Activated CD4-positive, alpha-beta memory T cell treated with anti-CD3 and anti-CD28 coated beads for 36 hours (primary cell): ENCODE measurements at regions of chr2 and their contacts with region 1.

Region 1: DNA sequence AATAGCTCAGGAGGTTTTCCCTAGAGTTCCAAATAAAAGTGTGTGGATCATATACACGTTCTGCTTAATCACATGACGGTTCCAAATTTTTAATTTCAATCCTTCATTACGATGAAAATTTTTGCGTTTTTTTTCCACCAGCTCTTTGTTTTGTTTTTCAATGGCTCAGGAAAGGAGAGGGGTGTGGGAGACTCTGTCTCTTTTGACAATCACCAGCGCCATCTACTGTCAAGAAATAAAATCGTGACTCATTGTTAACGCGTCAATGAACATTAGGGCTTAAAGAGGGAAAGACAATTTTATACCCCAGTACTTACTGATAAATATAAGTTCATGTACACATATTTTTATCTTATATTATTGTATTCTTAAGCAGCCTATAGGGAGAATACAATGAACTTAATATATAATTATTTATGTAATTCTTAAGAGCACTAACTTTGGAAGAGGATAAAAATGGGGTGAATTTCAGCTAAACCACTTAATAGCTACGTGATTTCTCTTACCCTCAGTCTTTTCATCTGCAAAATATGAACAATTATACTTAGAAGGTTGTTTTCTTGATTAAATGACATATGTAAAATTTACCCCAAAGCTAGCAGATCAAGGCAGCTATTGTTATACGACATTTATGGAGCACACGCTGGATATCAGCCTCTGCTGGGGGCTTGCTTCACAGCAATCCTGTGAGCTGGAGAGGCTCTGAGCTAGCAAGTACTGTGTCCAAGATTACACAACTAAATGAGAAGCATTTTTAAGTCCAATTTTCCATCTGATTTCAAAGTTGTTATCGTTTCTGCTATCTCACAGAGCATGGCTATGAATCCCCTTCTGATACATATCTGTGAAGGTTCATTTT is 47.4 kb upstream of the RMDN2 start:
- DNase-seq: no peak
- H3K4me3 Mint-ChIP-seq: no peak overlapping the region
- H3K27ac Mint-ChIP-seq: no peak overlapping the region
- H3K4me1 Mint-ChIP-seq: peaks cover 7% of the 10 kb centered on the region
- H3K27me3 Mint-ChIP-seq: peaks cover 16% of the 10 kb centered on the region

Region 2: GRCh38 chr2:37083873-37084794 is 793.6 kb before region 1 on chr2 and contains the starts of genes GPATCH11 and HEATR5B:
- CTCF ChIA-PET with region 1: interaction called, 3 read pairs
- POLR2A ChIA-PET with region 1: no interaction called
- intact Hi-C with region 1: loop called (anchors 10 kb)
- DNase-seq: peak; percentile 96
- H3K4me3 Mint-ChIP-seq: no peak within 1 kb of the TSS
- H3K27ac Mint-ChIP-seq: no peak within 1 kb of the TSS
- H3K4me1 Mint-ChIP-seq: peaks cover 36% of the 10 kb centered on the region
- H3K27me3 Mint-ChIP-seq: no peaks in the 10 kb centered on the region
- total RNA-seq, gene GPATCH11: 12.6 to 13.0 TPM
- total RNA-seq, gene HEATR5B: 18.1 to 20.3 TPM

Region 3: DNA sequence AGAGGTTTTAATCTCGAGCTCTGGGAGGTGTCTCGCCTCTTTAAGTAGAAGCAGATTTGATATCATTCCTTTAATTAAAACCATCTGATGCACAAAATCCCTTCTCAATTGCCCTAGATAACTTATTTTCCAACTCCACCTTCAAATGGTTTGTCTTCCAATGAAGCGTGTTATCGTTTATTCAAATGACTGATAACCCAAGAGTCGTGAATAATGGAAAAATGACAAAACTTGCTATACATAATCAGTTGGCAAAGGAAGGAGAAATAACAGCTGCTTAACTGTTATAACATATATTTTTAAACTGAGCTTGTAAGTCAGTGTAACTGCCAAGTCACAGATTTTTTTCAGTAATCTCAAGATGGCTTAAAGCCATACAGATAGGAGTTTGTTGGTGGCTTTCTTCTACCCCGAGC is 388.6 kb before region 1 on chr2:
- CTCF ChIA-PET with region 1: no interaction called
- POLR2A ChIA-PET with region 1: no interaction called
- intact Hi-C with region 1: no loop called
- DNase-seq: no peak
- H3K4me3 Mint-ChIP-seq: no peak overlapping the region
- H3K27ac Mint-ChIP-seq: no peak overlapping the region
- H3K4me1 Mint-ChIP-seq: no peaks in the 10 kb centered on the region
- H3K27me3 Mint-ChIP-seq: no peaks in the 10 kb centered on the region

Region 4: GRCh38 chr2:37537316-37537715 is 340.4 kb before region 1 on chr2:
- CTCF ChIA-PET with region 1: interaction called, 11 read pairs
- POLR2A ChIA-PET with region 1: no interaction called
- intact Hi-C with region 1: no loop called
- DNase-seq: no peak
- H3K4me3 Mint-ChIP-seq: no peak overlapping the region
- H3K27ac Mint-ChIP-seq: no peak overlapping the region
- H3K4me1 Mint-ChIP-seq: no peaks in the 10 kb centered on the region
- H3K27me3 Mint-ChIP-seq: peaks cover 1% of the 10 kb centered on the region

Region 5: DNA sequence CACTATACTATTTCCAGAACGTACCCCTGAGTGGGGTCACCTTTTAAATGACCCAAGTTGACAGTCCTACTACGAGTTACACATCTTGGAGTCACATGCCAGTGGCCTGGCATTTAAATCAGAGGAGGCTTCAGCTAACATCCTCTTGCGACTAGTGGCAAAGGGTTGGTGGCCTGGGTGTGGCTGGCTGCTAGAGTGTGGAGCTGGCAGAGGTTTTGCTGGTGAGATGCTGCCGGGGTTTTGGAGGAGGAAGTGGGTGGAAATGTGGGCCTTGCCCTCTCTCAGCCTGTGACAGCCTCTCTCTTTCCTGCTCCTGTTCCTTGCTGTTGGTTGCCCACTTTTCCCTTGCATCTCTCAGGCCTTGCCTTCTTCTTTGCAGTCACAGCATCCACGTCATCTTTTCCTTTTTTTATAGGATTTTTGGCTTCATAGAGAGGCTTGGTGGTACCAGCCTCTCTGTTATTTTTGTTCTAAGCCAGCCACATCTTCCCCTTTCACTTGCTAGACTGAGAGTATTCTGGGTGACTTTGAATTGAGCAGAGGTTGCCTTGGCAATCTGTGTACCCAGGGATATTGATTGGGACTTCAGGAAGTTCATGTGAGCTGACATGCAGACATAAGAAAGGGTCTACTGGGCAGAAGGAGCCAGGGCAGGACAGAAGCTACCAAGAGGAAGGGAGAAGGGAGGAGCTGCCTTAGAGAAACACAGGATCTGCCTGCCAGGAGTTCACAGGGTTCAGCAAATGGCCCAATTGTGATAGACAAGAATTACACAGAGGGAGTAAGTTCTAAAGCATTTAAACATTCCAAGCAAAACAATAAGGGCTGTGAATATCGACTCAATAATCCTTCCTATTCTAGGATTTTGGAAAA is 261.6 kb before region 1 on chr2:
- CTCF ChIA-PET with region 1: interaction called, 16 read pairs
- POLR2A ChIA-PET with region 1: no interaction called
- intact Hi-C with region 1: no loop called
- DNase-seq: peak; percentile 72
- H3K4me3 Mint-ChIP-seq: no peak overlapping the region
- H3K27ac Mint-ChIP-seq: peak overlapping the region; percentile 77
- H3K4me1 Mint-ChIP-seq: peaks cover 63% of the 10 kb centered on the region
- H3K27me3 Mint-ChIP-seq: no peaks in the 10 kb centered on the region

Region 6: GRCh38 chr2:37672104-37672869 is 205.4 kb before region 1 on chr2:
- CTCF ChIA-PET with region 1: interaction called, 16 read pairs
- POLR2A ChIA-PET with region 1: interaction called, 3 read pairs
- intact Hi-C with region 1: no loop called
- DNase-seq: peak; percentile 78
- H3K4me3 Mint-ChIP-seq: peak overlapping the region; percentile 95
- H3K27ac Mint-ChIP-seq: peak overlapping the region; percentile 80
- H3K4me1 Mint-ChIP-seq: peaks cover 39% of the 10 kb centered on the region
- H3K27me3 Mint-ChIP-seq: no peaks in the 10 kb centered on the region

Region 7: GRCh38 chr2:37851828-37852584 is 25.7 kb before region 1 on chr2:
- CTCF ChIA-PET with region 1: interaction called, 29 read pairs
- POLR2A ChIA-PET with region 1: interaction called, 13 read pairs
- intact Hi-C with region 1: no loop called
- DNase-seq: no peak
- H3K4me3 Mint-ChIP-seq: peak overlapping the region; percentile 21
- H3K27ac Mint-ChIP-seq: peak overlapping the region; percentile 83
- H3K4me1 Mint-ChIP-seq: peaks cover 22% of the 10 kb centered on the region
- H3K27me3 Mint-ChIP-seq: no peaks in the 10 kb centered on the region

Region 8: DNA sequence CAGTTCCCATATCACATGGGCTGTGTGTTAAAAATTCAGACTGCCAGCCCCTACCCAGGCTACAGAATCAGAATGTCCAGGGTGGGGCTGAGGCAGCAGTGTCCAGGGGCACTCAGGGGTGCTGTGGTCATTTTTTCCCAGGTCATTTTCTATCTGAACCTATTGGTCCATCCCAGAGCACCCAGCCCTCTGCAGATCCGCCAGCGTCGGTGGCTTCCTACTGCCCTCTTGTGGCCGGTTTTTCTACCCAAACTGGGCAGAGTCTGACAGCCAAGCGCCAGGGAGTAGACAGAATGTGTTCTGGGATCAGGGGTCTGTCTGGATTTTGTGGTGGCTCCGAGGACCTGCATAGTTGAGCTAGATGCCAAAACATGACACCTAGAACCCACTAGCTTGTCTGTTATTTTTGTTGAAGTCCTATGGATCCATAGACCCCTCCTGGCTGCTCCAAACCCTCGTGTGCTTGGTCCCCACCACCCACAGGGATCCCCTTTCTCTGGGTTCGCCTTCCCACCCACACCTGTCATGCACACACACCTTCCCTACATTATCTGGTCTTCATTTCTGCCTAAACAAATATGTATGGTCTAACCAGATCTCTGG is 13.3 kb after region 1 on chr2:
- CTCF ChIA-PET with region 1: interaction called, 53 read pairs
- POLR2A ChIA-PET with region 1: no interaction called
- intact Hi-C with region 1: loop called (anchors 2 kb)
- DNase-seq: peak; percentile 76
- H3K4me3 Mint-ChIP-seq: no peak overlapping the region
- H3K27ac Mint-ChIP-seq: no peak overlapping the region
- H3K4me1 Mint-ChIP-seq: peaks cover 49% of the 10 kb centered on the region
- H3K27me3 Mint-ChIP-seq: peaks cover 6% of the 10 kb centered on the region

Region 9: GRCh38 chr2:38556006-38556801 is 678.5 kb after region 1 on chr2:
- CTCF ChIA-PET with region 1: no interaction called
- POLR2A ChIA-PET with region 1: no interaction called
- intact Hi-C with region 1: no loop called
- DNase-seq: no peak
- H3K4me3 Mint-ChIP-seq: no peak overlapping the region
- H3K27ac Mint-ChIP-seq: peak overlapping the region; percentile 46
- H3K4me1 Mint-ChIP-seq: peaks cover 15% of the 10 kb centered on the region
- H3K27me3 Mint-ChIP-seq: no peaks in the 10 kb centered on the region